Ascending aorta (tissue), 2 donors: ENCODE measurements at regions of chr19 and their contacts with region 1.

Region 1: DNA sequence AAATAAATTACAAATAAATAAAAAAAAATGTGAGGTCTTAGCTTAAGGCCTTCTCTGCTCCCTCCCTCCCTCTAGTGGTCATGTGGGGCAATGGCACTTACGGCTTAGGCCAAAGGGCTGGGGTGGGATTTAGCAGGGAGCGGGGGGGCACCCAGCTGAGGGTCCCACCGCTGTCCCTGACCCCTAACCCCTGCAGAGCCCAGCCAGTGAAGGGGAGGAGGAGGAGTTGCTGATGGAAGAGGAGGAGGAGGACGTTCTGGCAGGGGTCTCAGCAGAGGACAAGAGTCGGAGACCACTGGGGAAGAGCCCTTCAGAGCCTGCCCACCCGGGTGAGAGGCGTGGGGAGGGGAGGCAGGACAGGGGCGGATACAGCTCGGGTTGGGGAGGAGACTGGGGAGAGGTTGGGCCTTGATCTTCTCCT is 9.3 kb downstream of the MPND start:
- DNase-seq: no peak
- H3K4me3 ChIP-seq: no peak overlapping the region
- H3K27ac ChIP-seq: no peak overlapping the region
- H3K4me1 ChIP-seq: no peaks in the 10 kb centered on the region
- H3K27me3 ChIP-seq: no peaks in the 10 kb centered on the region
- CTCF ChIP-seq: peak; percentile 42 to 93 (median 60)

Region 2: DNA sequence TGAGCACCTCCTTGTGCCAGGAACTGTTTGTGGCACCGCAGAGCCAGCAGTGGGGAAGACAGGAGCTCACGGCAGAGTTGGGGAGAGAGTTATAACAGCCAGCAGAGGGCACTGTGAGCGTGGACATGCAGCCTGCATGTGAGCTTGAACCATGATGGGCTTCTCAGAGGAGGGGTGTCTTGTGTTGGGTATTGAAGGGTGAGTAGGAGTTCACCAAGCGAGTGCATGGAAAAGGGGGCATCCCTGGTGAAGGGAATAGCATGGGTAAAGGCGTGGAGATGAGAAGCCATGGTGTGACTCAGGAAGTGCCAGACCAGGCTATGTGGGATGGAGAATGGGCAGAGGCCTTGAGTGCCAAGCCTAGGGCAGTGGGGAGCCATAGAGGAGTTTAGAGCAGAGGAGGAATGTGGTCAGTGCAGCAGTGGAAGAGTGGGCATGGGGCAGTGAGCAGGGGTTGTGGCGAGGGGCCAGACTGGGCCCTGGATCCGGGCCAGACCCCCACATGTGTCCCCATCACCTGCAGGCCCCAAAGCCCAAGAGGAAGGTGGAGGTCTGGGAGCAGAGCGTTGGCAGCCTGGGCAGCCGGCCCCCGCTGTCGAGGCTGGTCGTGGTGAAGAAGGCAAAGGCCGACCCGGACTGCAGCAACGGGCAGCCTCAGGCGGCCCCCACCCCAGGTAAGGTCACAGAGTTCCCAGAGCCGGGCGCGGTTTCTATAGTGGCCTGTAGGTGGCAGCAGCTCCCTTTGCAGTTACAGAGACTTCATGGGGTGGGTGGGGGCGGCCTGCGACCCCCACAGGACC is 85.4 kb before region 1 on chr19:
- intact Hi-C with region 1: loop called (anchors 5 kb)
- DNase-seq: peak in 1 of 2 donors; percentile 69
- H3K4me3 ChIP-seq: no peak overlapping the region
- H3K27ac ChIP-seq: no peak overlapping the region
- H3K4me1 ChIP-seq: no peaks in the 10 kb centered on the region
- H3K27me3 ChIP-seq: no peaks in the 10 kb centered on the region
- CTCF ChIP-seq: peak; percentile 77 to 91 (median 79)

Region 3: DNA sequence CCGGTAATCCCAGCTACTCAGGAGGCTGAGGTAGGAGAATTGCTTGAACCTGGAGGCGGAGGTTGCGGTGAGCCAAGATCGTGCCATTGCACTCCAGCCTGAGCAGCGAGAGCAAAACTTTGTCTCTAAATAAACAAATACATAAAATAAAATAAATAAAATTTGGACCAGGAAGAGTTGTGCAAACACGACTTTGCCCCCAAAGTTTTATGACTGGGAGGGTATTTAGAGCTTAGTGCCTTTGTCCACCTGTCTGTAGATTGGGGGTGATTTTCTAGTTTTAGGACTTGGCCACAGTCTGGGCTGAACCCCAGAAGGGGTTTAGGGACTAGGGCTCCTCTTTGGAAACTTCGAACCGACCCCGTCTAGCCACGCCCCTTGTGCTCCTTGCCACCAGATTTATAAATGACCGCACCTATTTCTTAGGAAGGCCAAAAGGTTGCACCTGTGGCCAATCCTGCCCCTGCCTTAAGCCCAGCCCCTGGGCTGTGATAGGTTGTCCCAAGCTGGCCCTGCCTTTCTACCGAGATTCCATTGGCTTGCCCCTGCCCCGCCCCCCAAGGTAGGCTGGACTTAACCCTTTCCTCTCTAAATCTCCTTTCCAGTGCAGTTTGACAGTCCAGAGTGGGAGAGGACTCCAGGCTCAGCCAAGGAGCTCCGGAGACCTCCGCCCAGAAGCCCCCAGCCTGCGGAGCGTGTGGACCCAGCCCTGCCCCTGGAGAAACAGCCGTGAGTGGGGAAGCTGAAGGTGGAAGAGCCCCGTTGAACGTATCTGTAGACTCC is 68.3 kb before region 1 on chr19:
- intact Hi-C with region 1: no loop called
- DNase-seq: no peak
- H3K4me3 ChIP-seq: no peak overlapping the region
- H3K27ac ChIP-seq: no peak overlapping the region
- H3K4me1 ChIP-seq: peaks cover 2% of the 10 kb centered on the region in 2 donors
- H3K27me3 ChIP-seq: peaks cover 11% of the 10 kb centered on the region
- CTCF ChIP-seq: no peak

Region 4: GRCh38 chr19:4294389-4294788 is 58.3 kb before region 1 on chr19:
- intact Hi-C with region 1: no loop called
- DNase-seq: no peak
- H3K4me3 ChIP-seq: no peak overlapping the region
- H3K27ac ChIP-seq: no peak overlapping the region
- H3K4me1 ChIP-seq: no peaks in the 10 kb centered on the region
- H3K27me3 ChIP-seq: no peaks in the 10 kb centered on the region
- CTCF ChIP-seq: no peak